Endothelial cell of umbilical vein (primary cell): ENCODE measurements at regions of chr3 and their contacts with region 1.

Region 1: GRCh38 chr3:123652346-123652984 is 67.6 kb upstream of the HACD2 start:
- DNase-seq: peak; percentile 75
- H3K4me3 ChIP-seq: no peak overlapping the region
- H3K27ac ChIP-seq: no peak overlapping the region
- H3K4me1 ChIP-seq: peaks cover 17% of the 10 kb centered on the region
- H3K27me3 ChIP-seq: no peaks in the 10 kb centered on the region
- CTCF ChIP-seq: peak; percentile 85 to 93
- POLR2A ChIP-seq: no peak

Region 2: GRCh38 chr3:123576122-123576521 is 76.3 kb before region 1 on chr3:
- CTCF ChIA-PET with region 1: no interaction called
- POLR2A ChIA-PET with region 1: no interaction called
- dilution Hi-C with region 1: no loop called
- intact Hi-C with region 1: no loop called
- DNase-seq: peak; percentile 33
- H3K4me3 ChIP-seq: no peak overlapping the region
- H3K27ac ChIP-seq: no peak overlapping the region
- H3K4me1 ChIP-seq: no peaks in the 10 kb centered on the region
- H3K27me3 ChIP-seq: no peaks in the 10 kb centered on the region
- CTCF ChIP-seq: no peak
- POLR2A ChIP-seq: no peak

Region 3: GRCh38 chr3:123667784-123668183 is 15.3 kb after region 1 on chr3:
- CTCF ChIA-PET with region 1: interaction called, 23 read pairs
- POLR2A ChIA-PET with region 1: no interaction called
- dilution Hi-C with region 1: no loop called
- intact Hi-C with region 1: no loop called
- DNase-seq: peak; percentile 92
- H3K4me3 ChIP-seq: no peak overlapping the region
- H3K27ac ChIP-seq: no peak overlapping the region
- H3K4me1 ChIP-seq: peaks cover 20% of the 10 kb centered on the region
- H3K27me3 ChIP-seq: peaks cover 0 to 3% of the 10 kb centered on the region in 2 experiments
- CTCF ChIP-seq: no peak
- POLR2A ChIP-seq: no peak

Region 4: GRCh38 chr3:123682781-123683504 is 30.5 kb after region 1 on chr3:
- CTCF ChIA-PET with region 1: interaction called, 12 read pairs
- POLR2A ChIA-PET with region 1: no interaction called
- dilution Hi-C with region 1: no loop called
- intact Hi-C with region 1: no loop called
- DNase-seq: no peak
- H3K4me3 ChIP-seq: no peak overlapping the region
- H3K27ac ChIP-seq: no peak overlapping the region
- H3K4me1 ChIP-seq: peaks cover 6% of the 10 kb centered on the region
- H3K27me3 ChIP-seq: no peaks in the 10 kb centered on the region
- CTCF ChIP-seq: no peak
- POLR2A ChIP-seq: no peak

Region 5: DNA sequence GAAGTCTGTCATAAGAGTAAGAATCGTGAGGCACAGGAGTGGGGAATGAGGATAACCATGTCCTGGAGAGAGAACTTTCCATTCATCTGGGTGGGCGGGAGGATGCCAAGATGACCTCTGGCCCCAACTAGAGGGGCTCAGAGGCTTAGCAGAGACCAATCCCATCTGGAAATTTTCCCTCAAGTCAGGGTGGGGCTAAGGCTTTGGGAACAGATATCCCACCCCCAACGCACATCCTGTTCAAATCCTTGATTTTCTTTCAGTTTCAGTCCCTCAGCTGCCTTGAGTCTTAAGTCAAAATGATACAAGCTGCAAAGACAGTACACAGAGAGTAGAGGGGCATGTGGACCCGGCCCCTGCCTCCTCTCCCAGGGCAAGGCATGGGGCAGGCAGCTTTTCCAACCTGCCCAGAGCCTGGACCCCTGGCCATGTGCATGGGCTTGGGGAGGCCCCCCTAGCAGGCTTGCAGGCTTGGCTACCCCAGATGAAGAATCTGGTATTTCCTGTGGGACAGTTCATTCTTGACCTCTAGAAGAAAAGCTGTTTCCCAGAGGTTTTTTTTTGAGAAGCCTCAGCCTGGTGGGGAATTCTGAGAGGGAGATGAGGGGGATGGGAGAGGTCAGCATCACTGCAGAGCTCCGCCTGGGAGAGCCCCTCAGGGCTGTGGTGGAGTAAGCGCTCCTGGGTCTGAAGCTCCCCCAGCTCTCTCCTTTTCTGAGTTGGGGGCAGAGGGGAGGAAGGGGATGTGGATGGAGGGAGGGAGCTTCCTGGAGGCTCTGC is 42.1 kb after region 1 on chr3:
- CTCF ChIA-PET with region 1: interaction called, 106 read pairs
- POLR2A ChIA-PET with region 1: no interaction called
- dilution Hi-C with region 1: no loop called
- intact Hi-C with region 1: no loop called
- DNase-seq: peak; percentile 21
- H3K4me3 ChIP-seq: no peak overlapping the region
- H3K27ac ChIP-seq: no peak overlapping the region
- H3K4me1 ChIP-seq: peaks cover 49% of the 10 kb centered on the region
- H3K27me3 ChIP-seq: no peaks in the 10 kb centered on the region
- CTCF ChIP-seq: no peak
- POLR2A ChIP-seq: no peak

Region 6: GRCh38 chr3:123700791-123701722 is 48.6 kb after region 1 on chr3:
- CTCF ChIA-PET with region 1: interaction called, 299 read pairs
- POLR2A ChIA-PET with region 1: no interaction called
- dilution Hi-C with region 1: no loop called
- intact Hi-C with region 1: loop called (anchors 1 kb)
- DNase-seq: no peak
- H3K4me3 ChIP-seq: no peak overlapping the region
- H3K27ac ChIP-seq: no peak overlapping the region
- H3K4me1 ChIP-seq: peaks cover 3% of the 10 kb centered on the region
- H3K27me3 ChIP-seq: no peaks in the 10 kb centered on the region
- CTCF ChIP-seq: no peak
- POLR2A ChIP-seq: no peak

Region 7: DNA sequence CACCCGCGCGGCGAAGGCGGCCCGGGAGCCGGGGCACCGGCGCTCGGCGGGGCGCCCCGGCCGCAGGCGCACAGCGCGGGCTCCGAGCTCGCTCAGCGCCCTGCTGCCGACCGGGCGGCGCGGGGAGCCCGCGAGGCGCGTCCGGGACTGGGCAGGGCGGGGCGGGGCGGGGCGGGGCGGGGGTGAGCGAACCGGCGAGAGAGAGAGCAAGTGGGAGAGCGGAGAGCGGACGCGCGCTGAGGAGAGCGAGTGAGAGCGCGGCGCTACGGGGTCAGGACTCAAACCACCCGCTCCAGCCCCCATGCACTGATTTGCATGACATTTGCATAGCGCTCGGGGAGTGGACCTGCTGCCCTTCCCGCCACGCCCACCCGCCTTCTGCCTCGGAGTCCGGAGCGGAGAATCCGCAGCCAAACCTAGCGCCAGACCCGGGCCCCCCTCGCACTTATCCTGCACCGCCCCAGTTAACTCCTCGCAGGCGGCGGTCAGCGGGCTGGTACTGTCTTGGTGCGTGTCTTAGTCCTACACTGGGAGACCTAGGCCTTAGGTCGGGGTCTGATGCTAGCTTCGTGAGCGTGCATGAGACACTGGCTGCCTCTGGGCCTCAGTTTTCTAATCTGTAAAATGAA is 231.9 kb after region 1 on chr3 and contains the start of gene MYLK:
- CTCF ChIA-PET with region 1: interaction called, 4 read pairs
- POLR2A ChIA-PET with region 1: no interaction called
- dilution Hi-C with region 1: no loop called
- intact Hi-C with region 1: loop called (anchors 10 kb)
- DNase-seq: peak; percentile 71
- H3K4me3 ChIP-seq: peak within 1 kb of the TSS; percentile 7 to 30 (median 20)
- H3K27ac ChIP-seq: no peak within 1 kb of the TSS
- H3K4me1 ChIP-seq: peaks cover 3% of the 10 kb centered on the region
- H3K27me3 ChIP-seq: peaks cover 8 to 14% of the 10 kb centered on the region in 2 experiments
- CTCF ChIP-seq: no peak
- POLR2A ChIP-seq: no peak
- total RNA-seq, gene MYLK: 17.2 and 22.2 TPM in 2 replicates